Calu3 (cell line): ENCODE measurements at regions of chr5 and their contacts with region 1.

Region 1: GRCh38 chr5:66209350-66209749 is 65.2 kb downstream of the SREK1 start:
- DNase-seq: peak; percentile 94
- H3K4me3 Mint-ChIP-seq: peak overlapping the region; percentile 22
- H3K27ac Mint-ChIP-seq: peak overlapping the region; percentile 79
- H3K4me1 Mint-ChIP-seq: peaks cover 31% of the 10 kb centered on the region
- H3K27me3 Mint-ChIP-seq: no peaks in the 10 kb centered on the region
- CTCF ChIP-seq: peak; percentile 11

Region 2: DNA sequence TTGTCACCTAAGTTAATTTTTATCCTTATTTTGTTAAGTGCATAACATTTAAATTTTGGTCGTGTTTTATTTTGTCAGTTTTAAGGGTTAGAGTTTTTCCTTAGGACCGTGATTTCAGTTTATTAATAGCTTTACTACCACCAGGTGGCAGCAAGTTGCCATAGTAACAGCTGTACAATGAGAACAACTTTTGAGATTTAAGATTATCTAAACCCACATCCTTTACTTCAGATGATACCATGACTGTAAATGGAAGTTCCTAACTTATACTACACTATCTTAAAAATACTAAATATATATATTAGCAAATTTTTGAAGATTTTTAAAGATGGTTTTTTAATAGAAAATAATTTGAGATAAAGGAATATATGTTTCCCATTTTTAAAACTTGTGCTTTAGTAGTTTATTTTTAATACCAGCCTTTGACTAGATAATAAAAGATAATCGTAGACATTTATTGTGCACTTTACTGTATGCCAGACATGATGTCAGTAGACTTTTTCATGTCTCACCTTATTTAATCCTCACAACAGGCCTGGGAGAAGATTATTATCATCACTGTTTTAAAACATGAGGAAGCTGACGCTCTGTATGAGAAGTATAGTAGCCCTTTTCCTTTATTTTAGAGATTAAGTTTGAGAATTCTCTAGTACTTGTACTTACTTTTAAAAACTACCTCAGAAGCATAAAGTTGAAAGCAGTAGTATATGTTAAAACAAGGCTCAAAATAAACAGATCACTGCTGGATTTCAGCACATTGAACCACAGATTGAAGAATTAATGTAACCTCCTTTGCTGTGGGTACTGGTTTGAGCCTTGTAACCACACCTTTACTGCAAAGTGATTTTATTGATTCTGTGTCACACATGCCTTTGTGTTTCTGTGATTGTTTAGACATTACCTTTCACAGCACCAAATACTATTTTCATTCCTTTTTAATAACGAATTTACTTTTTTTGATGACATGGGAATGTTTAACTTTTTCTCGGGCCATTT is 37.7 kb before region 1 on chr5:
- CTCF ChIA-PET with region 1: interaction called, 5 read pairs
- intact Hi-C with region 1: loop called (anchors 2 kb)
- DNase-seq: peak; percentile 41
- H3K4me3 Mint-ChIP-seq: no peak overlapping the region
- H3K27ac Mint-ChIP-seq: no peak overlapping the region
- H3K4me1 Mint-ChIP-seq: peaks cover 12% of the 10 kb centered on the region
- H3K27me3 Mint-ChIP-seq: no peaks in the 10 kb centered on the region
- CTCF ChIP-seq: peak; percentile 39